Dorsolateral prefrontal cortex (tissue), 120 donors: ENCODE measurements at regions of chr16 and their contacts with region 1.

Region 1: GRCh38 chr16:85253084-85253941 is 141.0 kb upstream of the CIBAR2 start:
- DNase-seq: peak in 9 of 10 donors; percentile 40 to 78 (median 65)
- H3K4me3 ChIP-seq: no peak overlapping the region
- H3K27ac ChIP-seq: no peak overlapping the region
- H3K27me3 ChIP-seq: peaks cover 0 to 7% (median 0%) of the 10 kb centered on the region in 45 donors
- CTCF ChIP-seq: peak; percentile 56 to 98 (median 90)

Region 2: GRCh38 chr16:85114909-85115567 is 138.3 kb before region 1 on chr16:
- intact Hi-C with region 1: loop called in 1 of 2 experiments (anchors 5 kb)
- DNase-seq: peak; percentile 65 to 88 (median 84)
- H3K4me3 ChIP-seq: peak overlapping the region in 43 of 59 donors; percentile 4 to 52 (median 35)
- H3K27ac ChIP-seq: peak overlapping the region in 2 of 59 donors; percentile 22 to 57
- H3K27me3 ChIP-seq: no peaks in the 10 kb centered on the region
- CTCF ChIP-seq: peak; percentile 57 to 98 (median 92)

Region 3: GRCh38 chr16:85334718-85335583 is 81.6 kb after region 1 on chr16:
- intact Hi-C with region 1: no loop called
- DNase-seq: no peak
- H3K4me3 ChIP-seq: peak overlapping the region in 31 of 59 donors; percentile 3 to 53 (median 27)
- H3K27ac ChIP-seq: no peak overlapping the region
- H3K27me3 ChIP-seq: peaks cover 0 to 5% (median 0%) of the 10 kb centered on the region in 45 donors
- CTCF ChIP-seq: no peak